MCF 10A (cell line): ENCODE measurements at regions of chr2 and their contacts with region 1.

Region 1: DNA sequence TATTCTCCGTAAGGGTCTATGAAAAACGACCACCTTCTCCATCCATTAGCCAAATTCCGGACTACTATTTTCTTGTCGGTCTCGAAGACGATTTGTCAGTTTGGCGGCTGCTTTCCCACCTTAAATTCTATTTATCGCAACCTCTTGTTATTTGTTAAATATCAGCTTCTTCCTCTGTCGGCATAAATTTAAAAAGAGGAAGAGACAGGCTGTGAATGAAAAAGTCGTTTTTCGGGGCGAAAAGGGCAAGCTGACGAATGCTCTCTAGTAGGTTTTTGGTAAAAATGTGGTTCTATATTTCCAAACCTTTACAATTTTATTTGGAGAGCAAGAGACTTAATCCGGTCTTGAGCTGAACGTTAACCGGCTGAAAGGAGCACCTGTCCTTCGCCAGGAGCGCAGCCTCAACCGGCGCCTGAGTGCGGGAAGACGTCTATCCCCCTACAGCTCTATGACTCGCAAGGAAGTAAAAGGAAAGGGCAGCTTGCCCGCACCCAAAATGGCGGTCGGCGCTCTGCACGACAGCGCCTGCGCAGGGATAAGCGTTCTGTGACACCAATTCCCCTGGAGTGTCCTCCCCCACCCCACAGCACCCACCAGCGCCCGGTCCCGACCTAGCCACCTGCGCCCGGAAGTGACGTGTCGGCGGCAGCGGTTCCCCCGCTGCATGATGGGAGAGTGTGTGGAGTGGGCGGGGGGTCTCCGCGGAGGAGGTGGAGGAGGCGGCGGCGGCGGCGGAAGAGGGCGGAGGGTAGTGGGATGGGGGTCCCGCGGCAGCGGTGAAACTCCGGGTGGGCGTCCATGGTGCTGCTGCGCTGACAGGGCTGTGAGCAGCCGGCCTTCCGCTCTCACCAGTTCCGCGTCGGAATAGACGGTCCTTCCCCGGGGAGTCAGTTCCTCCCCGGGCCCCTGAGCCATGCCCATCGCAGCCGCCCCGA is at the start of gene AFTPH:
- DNase-seq: peak; percentile 99
- H3K4me3 Mint-ChIP-seq: peak within 1 kb of the TSS; percentile 83
- H3K27ac Mint-ChIP-seq: peak within 1 kb of the TSS; percentile 94
- H3K4me1 Mint-ChIP-seq: peaks cover 8% of the 10 kb centered on the region
- H3K27me3 Mint-ChIP-seq: no peaks in the 10 kb centered on the region
- CTCF ChIP-seq: no peak
- total RNA-seq, gene AFTPH: 24.2 and 24.7 TPM in 2 replicates

Region 2: GRCh38 chr2:64453770-64454385 is 70.1 kb before region 1 on chr2 and contains the start of gene LGALSL:
- CTCF ChIA-PET with region 1: interaction called, 4 read pairs
- POLR2A ChIA-PET with region 1: interaction called, 14 read pairs
- intact Hi-C with region 1: no loop called
- DNase-seq: peak; percentile 66
- H3K4me3 Mint-ChIP-seq: peak within 1 kb of the TSS; percentile 75
- H3K27ac Mint-ChIP-seq: peak within 1 kb of the TSS; percentile 86
- H3K4me1 Mint-ChIP-seq: peaks cover 16% of the 10 kb centered on the region
- H3K27me3 Mint-ChIP-seq: no peaks in the 10 kb centered on the region
- CTCF ChIP-seq: no peak
- total RNA-seq, gene LGALSL: 11.4 and 13.5 TPM in 2 replicates

Region 3: DNA sequence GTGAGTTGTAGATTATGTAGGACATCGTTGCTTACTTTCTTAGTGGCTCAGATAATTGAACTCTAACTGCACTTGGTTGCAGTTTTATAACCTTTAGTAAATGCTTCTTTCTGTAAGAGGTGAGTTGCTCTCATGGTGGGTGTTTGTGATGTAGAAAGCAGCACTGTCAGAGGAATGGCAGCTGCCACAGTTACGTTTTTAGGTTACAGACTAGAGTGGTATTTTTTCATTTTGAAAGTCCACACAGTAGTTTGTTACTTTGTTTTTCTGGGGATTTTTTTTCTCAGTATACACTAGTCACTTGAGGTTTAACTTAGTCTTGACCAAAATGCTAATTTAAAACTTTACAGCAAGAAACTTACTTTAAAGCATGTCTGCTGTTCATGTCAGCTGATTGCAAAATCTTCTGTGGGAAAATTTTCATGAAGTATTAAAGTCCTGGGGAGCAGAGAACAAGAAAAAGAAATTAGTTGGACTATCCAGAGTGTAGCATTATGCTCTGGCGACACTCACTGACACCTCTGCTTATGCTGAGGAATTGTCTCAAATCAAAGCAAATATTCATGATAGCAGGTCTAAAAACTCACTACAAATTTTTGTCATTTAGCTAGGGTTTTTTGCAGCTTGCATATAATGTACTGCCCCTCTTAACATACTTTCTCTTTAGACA is 15.0 kb after region 1 on chr2:
- CTCF ChIA-PET with region 1: interaction called, 4 read pairs
- POLR2A ChIA-PET with region 1: interaction called, 34 read pairs
- intact Hi-C with region 1: no loop called
- DNase-seq: no peak
- H3K4me3 Mint-ChIP-seq: no peak overlapping the region
- H3K27ac Mint-ChIP-seq: no peak overlapping the region
- H3K4me1 Mint-ChIP-seq: peaks cover 47% of the 10 kb centered on the region
- H3K27me3 Mint-ChIP-seq: no peaks in the 10 kb centered on the region
- CTCF ChIP-seq: no peak

Region 4: DNA sequence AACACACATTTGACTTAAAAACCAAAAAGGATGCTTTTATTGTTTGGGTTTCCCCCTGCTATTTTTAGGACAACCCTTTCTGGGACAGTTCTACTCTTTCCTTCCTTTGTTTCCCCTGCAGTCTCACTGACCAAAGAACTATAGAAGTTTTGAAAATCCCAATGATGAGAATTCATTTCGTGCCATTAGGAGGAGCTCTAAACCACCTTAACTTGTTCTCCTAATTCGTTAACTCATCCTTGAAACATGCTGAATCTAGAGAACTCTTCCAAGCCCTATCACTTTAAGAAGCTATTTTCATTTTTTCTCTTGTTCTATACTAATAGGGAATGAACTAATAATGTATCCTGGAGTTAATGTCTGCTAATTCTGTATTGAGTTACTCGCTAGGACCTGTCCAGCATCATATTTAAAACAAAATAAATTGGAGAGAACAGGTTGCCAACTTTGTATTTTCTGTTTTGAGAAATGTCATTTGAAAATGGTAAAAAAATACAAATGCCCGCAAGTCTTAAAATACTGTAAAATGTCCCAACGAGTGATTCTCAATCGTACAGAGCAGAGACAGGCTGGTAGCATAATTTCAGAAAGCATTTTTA is 63.0 kb after region 1 on chr2:
- CTCF ChIA-PET with region 1: interaction called, 4 read pairs
- POLR2A ChIA-PET with region 1: interaction called, 11 read pairs
- intact Hi-C with region 1: no loop called
- DNase-seq: peak; percentile 59
- H3K4me3 Mint-ChIP-seq: no peak overlapping the region
- H3K27ac Mint-ChIP-seq: peak overlapping the region; percentile 57
- H3K4me1 Mint-ChIP-seq: no peaks in the 10 kb centered on the region
- H3K27me3 Mint-ChIP-seq: no peaks in the 10 kb centered on the region
- CTCF ChIP-seq: peak; percentile 67

Region 5: DNA sequence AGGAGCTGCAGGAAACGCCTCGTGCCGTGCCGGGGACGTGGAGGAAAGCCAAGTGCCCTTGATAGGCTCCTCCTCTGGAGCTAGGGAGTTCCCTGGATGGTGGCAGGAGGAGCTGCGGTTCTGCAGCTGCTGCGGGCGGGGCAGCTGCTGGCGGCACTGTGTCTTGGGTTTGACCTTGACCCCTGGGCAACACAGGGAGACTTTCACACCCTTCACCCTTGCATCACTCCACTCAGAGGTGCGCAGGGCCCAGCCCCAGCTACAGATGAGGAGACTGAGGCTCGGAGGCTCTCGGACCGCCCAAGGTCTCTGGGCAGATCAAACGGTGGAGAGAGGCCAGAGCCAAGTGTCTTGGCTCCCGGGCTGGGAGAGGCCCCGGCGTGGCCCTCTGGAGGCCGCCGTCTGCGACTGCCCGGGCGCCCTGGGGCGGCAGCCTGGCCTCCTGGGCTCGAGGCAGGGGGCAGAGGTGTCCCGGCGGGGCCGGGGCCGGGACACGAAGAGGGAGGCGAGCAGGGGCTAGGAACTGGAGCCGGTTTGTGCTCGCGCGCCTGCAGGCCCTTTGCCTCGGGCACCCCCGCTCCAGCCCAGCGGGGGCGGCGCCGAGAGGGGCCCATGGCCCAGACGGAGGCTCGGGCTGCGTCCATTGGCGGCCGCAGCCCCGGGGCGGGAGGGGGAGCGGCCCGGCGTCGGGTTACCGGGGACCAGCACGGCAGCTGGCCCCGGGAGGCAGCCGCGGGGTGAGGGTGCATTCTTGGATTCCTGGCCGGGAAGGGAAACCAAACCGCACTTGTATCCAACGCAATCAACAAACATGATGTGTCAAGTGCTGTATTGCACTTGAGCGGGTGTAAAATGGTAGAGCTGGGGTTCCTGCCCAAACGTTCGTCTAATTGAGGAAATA is 335.6 kb after region 1 on chr2:
- CTCF ChIA-PET with region 1: interaction called, 5 read pairs
- POLR2A ChIA-PET with region 1: interaction called, 18 read pairs
- intact Hi-C with region 1: no loop called
- DNase-seq: peak; percentile 96
- H3K4me3 Mint-ChIP-seq: no peak overlapping the region
- H3K27ac Mint-ChIP-seq: no peak overlapping the region
- H3K4me1 Mint-ChIP-seq: peaks cover 11% of the 10 kb centered on the region
- H3K27me3 Mint-ChIP-seq: no peaks in the 10 kb centered on the region
- CTCF ChIP-seq: peak; percentile 15

Region 6: GRCh38 chr2:64888591-64889309 is 364.8 kb after region 1 on chr2:
- CTCF ChIA-PET with region 1: interaction called, 3 read pairs
- POLR2A ChIA-PET with region 1: interaction called, 4 read pairs
- intact Hi-C with region 1: loop called (anchors 1 kb)
- DNase-seq: peak; percentile 88
- H3K4me3 Mint-ChIP-seq: no peak overlapping the region
- H3K27ac Mint-ChIP-seq: no peak overlapping the region
- H3K4me1 Mint-ChIP-seq: no peaks in the 10 kb centered on the region
- H3K27me3 Mint-ChIP-seq: peaks cover 25% of the 10 kb centered on the region
- CTCF ChIP-seq: peak; percentile 55